ENCODE measurements at regions of chr2 and their contacts with region 1.

Region 1: GRCh38 chr2:4175343-4175742 is 472.0 kb downstream of the DCDC2C start:
- H3K4me3 Mint-ChIP-seq: no peak overlapping the region
- H3K27ac Mint-ChIP-seq: no peak overlapping the region
- H3K4me1 Mint-ChIP-seq: no peaks in the 10 kb centered on the region
- H3K27me3 Mint-ChIP-seq: no peaks in the 10 kb centered on the region

Region 2: GRCh38 chr2:3864943-3865865 is 310.1 kb before region 1 on chr2:
- intact Hi-C with region 1: no loop called
- H3K4me3 Mint-ChIP-seq: no peak overlapping the region
- H3K27ac Mint-ChIP-seq: no peak overlapping the region
- H3K4me1 Mint-ChIP-seq: no peaks in the 10 kb centered on the region
- H3K27me3 Mint-ChIP-seq: no peaks in the 10 kb centered on the region

Region 3: GRCh38 chr2:4134551-4135550 is 40.5 kb before region 1 on chr2:
- intact Hi-C with region 1: no loop called
- H3K4me3 Mint-ChIP-seq: no peak overlapping the region
- H3K27ac Mint-ChIP-seq: no peak overlapping the region
- H3K4me1 Mint-ChIP-seq: peaks cover 6% of the 10 kb centered on the region
- H3K27me3 Mint-ChIP-seq: no peaks in the 10 kb centered on the region

Region 4: DNA sequence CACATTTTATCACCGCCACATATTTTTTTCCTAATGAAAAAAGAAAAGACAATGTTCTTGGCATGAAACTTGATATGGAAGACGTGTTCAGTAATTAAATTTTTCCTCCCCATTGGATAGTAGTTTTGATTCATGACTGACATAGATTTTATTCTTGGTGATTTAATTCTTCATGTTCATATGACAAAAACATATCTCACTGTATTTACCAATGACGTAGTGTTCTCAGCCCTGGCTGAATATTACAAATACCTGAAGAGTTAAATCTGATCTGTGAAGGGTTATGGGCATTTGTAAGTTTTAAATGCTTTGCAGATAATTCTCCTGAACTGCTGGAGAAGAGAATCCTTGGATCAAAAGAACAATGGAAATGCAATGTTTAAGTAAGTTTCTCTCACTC is 11.1 kb before region 1 on chr2:
- intact Hi-C with region 1: loop called (anchors 1 kb)
- H3K4me3 Mint-ChIP-seq: no peak overlapping the region
- H3K27ac Mint-ChIP-seq: no peak overlapping the region
- H3K4me1 Mint-ChIP-seq: no peaks in the 10 kb centered on the region
- H3K27me3 Mint-ChIP-seq: no peaks in the 10 kb centered on the region

Measured in dendritic cell treated with granulocyte-macrophage colony-stimulating factor and Interleukin-4, amounts not matched to agents 40 ng/mL and 50 ng/mL, for 4 days (primary cell).